K562 (cell line): ENCODE measurements at regions of chr4 and their contacts with region 1.

Region 1: DNA sequence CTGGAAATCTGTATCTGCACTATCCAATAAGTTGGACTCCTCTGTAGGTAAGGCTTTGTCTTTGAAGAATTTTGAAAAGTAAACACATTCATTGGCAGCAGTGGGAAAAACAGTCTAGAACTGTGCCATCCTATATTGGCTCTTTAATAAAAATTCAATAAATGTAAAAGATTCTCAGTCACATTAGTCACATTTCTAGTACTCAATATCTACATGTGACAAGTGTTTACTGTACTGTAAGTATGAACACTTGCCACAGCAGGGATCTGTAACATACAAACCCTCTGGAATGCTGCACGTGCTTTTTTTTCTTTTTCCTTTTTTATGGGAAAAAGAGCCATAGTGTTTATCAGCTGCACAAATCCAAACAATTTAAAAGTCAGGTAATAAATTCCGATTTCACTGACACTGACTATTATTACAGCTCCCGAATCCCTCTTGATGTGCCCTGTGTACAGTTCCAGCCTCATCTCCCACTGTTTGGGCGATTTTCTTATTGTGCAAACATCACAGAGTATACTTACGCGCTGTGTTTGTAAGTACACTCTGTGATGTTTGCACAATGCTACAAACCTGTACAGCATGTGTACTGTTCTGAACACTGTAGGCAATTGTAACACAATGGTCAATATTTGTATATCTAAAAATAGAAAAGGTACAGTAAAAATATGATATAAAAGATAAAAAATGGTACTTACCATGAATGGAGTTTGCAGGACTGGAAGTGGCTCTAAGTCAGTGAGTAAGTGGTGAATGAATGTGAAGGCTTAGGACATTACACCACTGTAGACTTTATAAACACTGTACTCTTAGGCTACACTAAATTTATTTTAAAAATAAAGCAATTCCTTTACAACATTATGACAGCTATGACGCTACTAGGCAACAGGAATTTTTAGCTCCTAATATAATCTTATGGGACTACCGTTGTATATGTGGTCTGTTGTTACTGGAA is 8.7 kb downstream of the PYURF start:
- DNase-seq: no peak
- ATAC-seq: no peak
- H3K4me3 ChIP-seq: no peak overlapping the region
- H3K27ac ChIP-seq: no peak overlapping the region
- H3K4me1 ChIP-seq: peaks cover 3 to 6% of the 10 kb centered on the region in 2 experiments; a peak in 3 of 5 replicates
- H3K27me3 ChIP-seq: 0 out of 5 replicates have a peak, but pooled peaks cover 0 to 3% of the 10 kb centered on the region in 2 experiments
- CTCF ChIP-seq: no peak
- EP300 ChIP-seq: no peak
- POLR2A ChIP-seq: no peak
- RAD21 ChIP-seq: no peak

Region 2: GRCh38 chr4:87235020-87235671 is 1279.7 kb before region 1 on chr4:
- CTCF ChIA-PET with region 1: no interaction called
- POLR2A ChIA-PET with region 1: no interaction called
- in situ Hi-C with region 1: no loop called
- intact Hi-C with region 1: no loop called
- DNase-seq: no peak
- ATAC-seq: peak; percentile 18; the same call in 2 of the 3 replicates
- H3K4me3 ChIP-seq: peak overlapping the region; percentile 35
- H3K27ac ChIP-seq: no peak overlapping the region; the same call in 2 of the 3 replicates
- H3K4me1 ChIP-seq: peaks cover 0 to 3% of the 10 kb centered on the region in 2 experiments; a peak in 1 of 5 replicates
- H3K27me3 ChIP-seq: no peaks in the 10 kb centered on the region; a peak in 1 of 5 replicates
- CTCF ChIP-seq: no peak
- EP300 ChIP-seq: no peak
- POLR2A ChIP-seq: no peak
- RAD21 ChIP-seq: no peak

Region 3: DNA sequence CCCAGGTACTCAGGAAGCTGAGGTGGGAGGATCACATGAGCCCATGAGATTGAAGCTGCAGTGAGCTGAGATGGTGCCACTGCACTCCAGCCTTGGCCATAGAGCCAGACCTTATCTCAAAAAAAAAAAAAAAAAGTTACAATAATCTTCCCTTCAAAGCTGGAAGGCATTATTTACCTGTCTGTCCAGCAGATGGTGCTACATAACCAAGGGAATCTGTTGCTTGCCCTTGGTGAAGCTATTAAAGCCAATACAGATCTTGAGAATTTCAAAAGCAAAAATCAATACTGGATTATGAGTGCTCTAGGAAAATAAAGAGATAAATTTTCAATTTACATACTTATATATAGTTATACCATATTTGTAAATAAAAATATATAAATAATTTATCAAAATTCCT is 481.5 kb before region 1 on chr4:
- CTCF ChIA-PET with region 1: interaction called, 7 read pairs
- POLR2A ChIA-PET with region 1: no interaction called
- in situ Hi-C with region 1: loop called (anchors 10 kb)
- intact Hi-C with region 1: loop called (anchors 1 kb)
- DNase-seq: peak; percentile 22 to 71 (median 46)
- ATAC-seq: peak; percentile 86
- H3K4me3 ChIP-seq: no peak overlapping the region
- H3K27ac ChIP-seq: no peak overlapping the region
- H3K4me1 ChIP-seq: no peaks in the 10 kb centered on the region
- H3K27me3 ChIP-seq: no peaks in the 10 kb centered on the region; a peak in 1 of 5 replicates
- CTCF ChIP-seq: peak; percentile 50 to 75 (median 53); a peak in 4 of 6 replicates
- EP300 ChIP-seq: no peak
- POLR2A ChIP-seq: no peak
- RAD21 ChIP-seq: peak; percentile 61

Region 4: DNA sequence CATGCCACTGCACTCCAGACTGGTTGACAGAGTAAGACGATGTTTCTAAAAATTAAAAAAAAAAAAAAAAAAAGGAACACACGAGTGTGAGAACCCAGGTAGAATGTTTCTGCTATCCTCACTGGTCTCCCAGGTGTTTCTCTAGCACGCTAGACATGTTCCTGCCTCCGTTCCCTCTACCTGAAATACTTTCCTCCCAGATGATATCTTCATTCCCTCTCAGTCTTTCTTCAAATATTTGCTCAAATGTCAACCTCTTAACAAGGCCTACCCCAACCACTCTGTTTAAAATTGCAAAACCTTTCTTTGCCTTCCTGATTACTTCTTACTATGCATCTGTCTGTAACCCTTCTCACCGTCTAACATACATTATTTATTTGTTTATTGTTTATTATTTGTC is 296.9 kb before region 1 on chr4:
- CTCF ChIA-PET with region 1: interaction called, 41 read pairs
- POLR2A ChIA-PET with region 1: interaction called, 3 read pairs
- in situ Hi-C with region 1: loop called (anchors 5 kb)
- intact Hi-C with region 1: loop called (anchors 1 kb)
- DNase-seq: no peak
- ATAC-seq: no peak
- H3K4me3 ChIP-seq: no peak overlapping the region
- H3K27ac ChIP-seq: no peak overlapping the region
- H3K4me1 ChIP-seq: no peaks in the 10 kb centered on the region; a peak in 1 of 5 replicates
- H3K27me3 ChIP-seq: peaks cover 0 to 11% of the 10 kb centered on the region in 2 experiments; a peak in 1 of 5 replicates
- CTCF ChIP-seq: no peak
- EP300 ChIP-seq: no peak
- POLR2A ChIP-seq: no peak
- RAD21 ChIP-seq: no peak

Region 5: GRCh38 chr4:88244816-88245579 is 269.8 kb before region 1 on chr4:
- CTCF ChIA-PET with region 1: no interaction called
- POLR2A ChIA-PET with region 1: no interaction called
- in situ Hi-C with region 1: no loop called
- intact Hi-C with region 1: no loop called
- DNase-seq: peak in 1 of 4 experiments; percentile 3
- ATAC-seq: peak; percentile 67
- H3K4me3 ChIP-seq: no peak overlapping the region
- H3K27ac ChIP-seq: no peak overlapping the region
- H3K4me1 ChIP-seq: peaks cover 0 to 14% of the 10 kb centered on the region in 2 experiments; a peak in 2 of 5 replicates
- H3K27me3 ChIP-seq: peaks cover 0 to 4% of the 10 kb centered on the region in 2 experiments; a peak in 1 of 5 replicates
- CTCF ChIP-seq: no peak
- EP300 ChIP-seq: no peak
- POLR2A ChIP-seq: no peak
- RAD21 ChIP-seq: no peak

Region 6: DNA sequence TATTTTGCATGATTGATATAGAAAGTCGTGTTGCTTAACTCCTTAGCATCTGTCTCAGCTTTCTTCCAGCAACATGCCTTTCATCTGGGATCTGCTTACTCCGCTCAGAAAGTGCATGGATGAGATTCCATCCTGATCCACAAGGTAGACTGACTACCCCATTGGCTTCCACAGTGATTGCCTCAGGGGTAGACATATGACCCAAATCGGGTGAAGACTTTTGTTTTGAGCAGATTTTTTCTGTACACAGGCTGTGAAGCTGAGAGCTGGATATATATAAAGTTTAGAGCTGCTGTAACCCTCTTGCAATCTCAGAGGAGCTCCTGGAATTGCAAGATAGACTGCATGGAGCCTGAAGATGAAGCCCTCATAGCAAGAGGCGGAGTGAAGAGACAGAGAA is 144.9 kb before region 1 on chr4:
- CTCF ChIA-PET with region 1: interaction called, 6 read pairs
- POLR2A ChIA-PET with region 1: no interaction called
- in situ Hi-C with region 1: no loop called
- intact Hi-C with region 1: loop called (anchors 2 kb)
- DNase-seq: no peak
- ATAC-seq: peak; percentile 22; the same call in 1 of the 3 replicates
- H3K4me3 ChIP-seq: no peak overlapping the region
- H3K27ac ChIP-seq: no peak overlapping the region
- H3K4me1 ChIP-seq: no peaks in the 10 kb centered on the region
- H3K27me3 ChIP-seq: no peaks in the 10 kb centered on the region; a peak in 1 of 5 replicates
- CTCF ChIP-seq: no peak
- EP300 ChIP-seq: no peak
- POLR2A ChIP-seq: no peak
- RAD21 ChIP-seq: no peak

Region 7: GRCh38 chr4:88378691-88379559 is 135.9 kb before region 1 on chr4 and contains the start of gene HERC6:
- CTCF ChIA-PET with region 1: interaction called, 3 read pairs
- POLR2A ChIA-PET with region 1: no interaction called
- in situ Hi-C with region 1: no loop called
- intact Hi-C with region 1: loop called (anchors 2 kb)
- DNase-seq: peak; percentile 10 to 63 (median 36)
- ATAC-seq: peak; percentile 99
- H3K4me3 ChIP-seq: peak within 1 kb of the TSS; percentile 64
- H3K27ac ChIP-seq: no peak within 1 kb of the TSS
- H3K4me1 ChIP-seq: peaks cover 0 to 8% of the 10 kb centered on the region in 2 experiments; a peak in 2 of 5 replicates
- H3K27me3 ChIP-seq: peaks cover 4 to 12% of the 10 kb centered on the region in 2 experiments; a peak in 3 of 5 replicates
- CTCF ChIP-seq: peak; percentile 53 to 77 (median 67)
- EP300 ChIP-seq: no peak
- POLR2A ChIP-seq: no peak
- RAD21 ChIP-seq: peak; percentile 7 to 42; a peak in 2 of 4 replicates
- polyA plus RNA-seq, gene HERC6: 0.01 to 0.04 TPM

Region 8: GRCh38 chr4:88452912-88453311 is 61.9 kb before region 1 on chr4:
- CTCF ChIA-PET with region 1: no interaction called
- POLR2A ChIA-PET with region 1: no interaction called
- in situ Hi-C with region 1: no loop called
- intact Hi-C with region 1: loop called (anchors 5 kb)
- DNase-seq: peak in 1 of 4 experiments; percentile 15
- ATAC-seq: no peak
- H3K4me3 ChIP-seq: no peak overlapping the region
- H3K27ac ChIP-seq: no peak overlapping the region
- H3K4me1 ChIP-seq: peaks cover 0 to 9% of the 10 kb centered on the region in 2 experiments; a peak in 2 of 5 replicates
- H3K27me3 ChIP-seq: peaks cover 0 to 6% of the 10 kb centered on the region in 2 experiments; a peak in 3 of 5 replicates
- CTCF ChIP-seq: no peak
- EP300 ChIP-seq: no peak
- POLR2A ChIP-seq: no peak
- RAD21 ChIP-seq: no peak

Region 9: DNA sequence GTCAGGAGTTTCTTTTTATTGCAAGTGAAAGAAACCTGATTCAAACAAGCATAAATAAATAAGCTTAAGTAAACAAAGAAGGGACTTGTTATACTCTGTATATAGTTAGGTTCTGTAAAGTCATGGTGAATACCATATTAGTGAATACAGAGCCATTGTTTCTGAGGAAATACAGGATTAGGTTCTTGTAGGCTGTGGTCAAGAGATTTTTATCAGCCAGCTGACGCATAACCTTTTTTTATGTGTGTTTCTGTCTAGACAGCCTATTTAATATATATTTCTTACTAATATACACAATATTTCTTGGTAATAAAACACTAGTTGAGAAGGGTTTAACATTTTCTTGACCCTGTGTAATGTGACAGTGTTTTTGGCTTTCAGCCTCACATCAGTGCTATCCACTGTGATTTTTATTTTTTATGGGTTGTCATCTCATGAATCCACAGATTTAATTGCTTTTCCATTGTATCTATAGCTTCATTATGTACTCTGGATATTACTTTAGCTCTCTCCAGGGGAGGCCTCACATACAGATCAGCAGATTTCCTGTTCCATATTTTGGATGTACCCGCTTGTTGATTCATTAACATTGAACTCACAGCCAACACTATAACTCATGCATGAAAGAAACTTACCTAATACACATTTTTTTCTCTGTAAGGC is 85.5 kb after region 1 on chr4:
- CTCF ChIA-PET with region 1: no interaction called
- POLR2A ChIA-PET with region 1: no interaction called
- in situ Hi-C with region 1: no loop called
- intact Hi-C with region 1: no loop called
- DNase-seq: no peak
- ATAC-seq: no peak
- H3K4me3 ChIP-seq: no peak overlapping the region
- H3K27ac ChIP-seq: no peak overlapping the region
- H3K4me1 ChIP-seq: peaks cover 0 to 15% of the 10 kb centered on the region in 2 experiments; a peak in 3 of 5 replicates
- H3K27me3 ChIP-seq: no peaks in the 10 kb centered on the region
- CTCF ChIP-seq: no peak
- EP300 ChIP-seq: no peak
- POLR2A ChIP-seq: no peak
- RAD21 ChIP-seq: no peak